Activated CD4-positive, alpha-beta T cell treated with anti-CD3 and anti-CD28 coated beads for 36 hours (primary cell): ENCODE measurements at regions of chr2 and their contacts with region 1.

Region 1: GRCh38 chr2:73176881-73177644 is 25.3 kb upstream of the NOTO start:
- DNase-seq: peak; percentile 95
- ATAC-seq: peak; percentile 72
- H3K4me3 Mint-ChIP-seq: peak overlapping the region; percentile 71
- H3K27ac Mint-ChIP-seq: peak overlapping the region; percentile 63
- H3K4me1 Mint-ChIP-seq: peaks cover 31% of the 10 kb centered on the region
- H3K27me3 Mint-ChIP-seq: peaks cover 42% of the 10 kb centered on the region

Region 2: DNA sequence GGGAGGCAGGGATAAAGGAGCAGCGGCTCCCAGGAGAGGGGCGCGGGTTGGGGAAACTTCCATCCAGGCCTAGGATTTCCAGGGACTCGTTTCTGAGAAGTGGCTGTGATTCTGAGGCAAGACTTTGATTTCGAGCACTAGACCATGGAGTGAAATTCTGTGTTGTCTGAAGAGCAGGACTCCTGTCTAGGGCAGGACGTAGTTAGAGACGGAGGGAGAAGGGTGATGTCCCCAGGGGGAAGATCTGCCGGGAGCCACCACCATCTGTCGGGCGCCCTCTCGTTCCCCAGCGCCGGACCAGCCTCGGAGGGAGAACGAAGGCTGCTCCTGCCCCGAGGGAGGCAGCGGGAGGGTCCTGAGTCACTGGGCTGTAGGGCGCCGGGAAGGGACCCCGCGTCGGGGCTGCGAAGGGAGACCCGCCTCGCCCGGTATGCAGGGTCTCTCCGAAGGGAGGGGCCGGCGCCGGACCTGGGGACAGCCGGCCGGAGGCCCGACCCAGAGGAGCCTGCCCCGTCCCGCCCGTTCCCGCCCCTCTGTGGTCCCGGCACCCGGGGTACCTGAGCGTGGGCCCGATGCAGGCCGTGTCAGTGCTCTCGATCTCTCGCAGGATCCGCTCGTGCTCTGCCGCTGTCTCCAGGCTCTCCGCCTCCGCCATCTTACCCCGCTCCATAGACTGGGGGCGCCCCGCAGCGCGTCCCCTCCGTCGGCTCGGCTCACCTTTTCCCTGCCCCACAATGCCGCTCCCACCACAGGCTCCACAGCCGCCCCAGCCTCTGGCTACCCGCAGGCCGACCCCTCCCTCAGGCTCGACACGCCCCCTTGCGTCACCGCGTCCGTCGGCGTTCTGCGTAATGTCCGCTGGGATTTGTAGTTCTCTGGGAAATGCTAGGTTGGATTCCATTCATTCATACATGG is 351.6 kb before region 1 on chr2 and contains the start of gene EXOC6B:
- CTCF ChIA-PET with region 1: interaction called, 3 read pairs
- POLR2A ChIA-PET with region 1: no interaction called
- intact Hi-C with region 1: loop called in 1 of 2 experiments (anchors 5 kb)
- DNase-seq: peak; percentile 91
- ATAC-seq: peak; percentile 80
- H3K4me3 Mint-ChIP-seq: peak within 1 kb of the TSS; percentile 93
- H3K27ac Mint-ChIP-seq: peak within 1 kb of the TSS; percentile 75
- H3K4me1 Mint-ChIP-seq: peaks cover 40% of the 10 kb centered on the region
- H3K27me3 Mint-ChIP-seq: peaks cover 2% of the 10 kb centered on the region
- total RNA-seq, gene EXOC6B: 7.0 to 9.0 TPM

Region 3: DNA sequence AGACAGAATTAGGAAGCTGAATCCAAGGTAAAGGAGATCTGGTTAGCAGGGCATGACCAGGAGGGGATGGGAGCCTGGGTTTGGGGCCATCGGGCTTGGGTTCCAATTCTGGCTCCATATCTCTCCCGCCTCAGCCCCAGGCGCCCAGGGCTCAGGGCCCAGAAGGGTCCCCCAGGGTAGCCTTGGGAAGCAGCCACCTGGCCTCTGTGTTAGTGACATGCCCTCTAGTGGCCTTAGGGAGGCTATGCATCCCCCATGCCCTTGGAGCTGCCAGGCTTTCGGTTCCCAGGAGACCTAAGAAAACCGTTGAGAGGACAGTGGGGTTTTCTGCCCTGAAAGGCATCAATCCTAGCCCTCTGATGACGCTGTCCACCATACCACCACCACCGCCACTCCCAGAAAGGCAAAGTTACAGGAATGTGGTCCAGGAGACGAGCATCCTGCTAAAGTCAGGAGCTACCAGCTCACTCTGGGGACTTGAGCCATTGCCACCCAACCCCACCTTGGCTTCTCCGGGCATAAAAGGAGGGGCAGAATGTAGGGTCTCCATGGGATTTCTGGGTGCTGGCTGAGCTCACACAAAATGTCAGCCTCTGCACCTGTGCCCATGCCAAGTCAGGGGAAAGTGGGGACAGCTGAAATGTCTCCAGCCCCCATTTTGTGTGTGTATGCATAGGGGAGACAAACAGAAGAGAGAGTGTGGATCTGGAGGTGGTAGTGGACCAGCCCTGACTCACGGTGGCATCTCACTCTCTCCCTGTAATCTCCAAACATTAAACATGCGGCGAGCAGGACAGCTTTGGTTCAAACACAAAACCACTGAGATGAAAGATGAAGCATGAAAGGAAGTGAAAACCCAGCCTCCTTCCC is 203.3 kb before region 1 on chr2:
- CTCF ChIA-PET with region 1: interaction called, 11 read pairs
- POLR2A ChIA-PET with region 1: interaction called, 3 read pairs
- intact Hi-C with region 1: no loop called
- DNase-seq: peak; percentile 64
- ATAC-seq: peak; percentile 83
- H3K4me3 Mint-ChIP-seq: no peak overlapping the region
- H3K27ac Mint-ChIP-seq: no peak overlapping the region
- H3K4me1 Mint-ChIP-seq: no peaks in the 10 kb centered on the region
- H3K27me3 Mint-ChIP-seq: no peaks in the 10 kb centered on the region

Region 4: GRCh38 chr2:73085691-73086360 is 91.2 kb before region 1 on chr2:
- CTCF ChIA-PET with region 1: interaction called, 56 read pairs
- POLR2A ChIA-PET with region 1: no interaction called
- intact Hi-C with region 1: loop called (anchors 1 kb)
- DNase-seq: peak; percentile 91
- ATAC-seq: peak; percentile 98
- H3K4me3 Mint-ChIP-seq: no peak overlapping the region
- H3K27ac Mint-ChIP-seq: no peak overlapping the region
- H3K4me1 Mint-ChIP-seq: no peaks in the 10 kb centered on the region
- H3K27me3 Mint-ChIP-seq: no peaks in the 10 kb centered on the region

Region 5: GRCh38 chr2:73156539-73157124 is 20.4 kb before region 1 on chr2:
- CTCF ChIA-PET with region 1: interaction called, 12 read pairs
- POLR2A ChIA-PET with region 1: no interaction called
- intact Hi-C with region 1: no loop called
- DNase-seq: peak; percentile 73
- ATAC-seq: peak; percentile 61
- H3K4me3 Mint-ChIP-seq: no peak overlapping the region
- H3K27ac Mint-ChIP-seq: no peak overlapping the region
- H3K4me1 Mint-ChIP-seq: no peaks in the 10 kb centered on the region
- H3K27me3 Mint-ChIP-seq: peaks cover 31% of the 10 kb centered on the region

Region 6: DNA sequence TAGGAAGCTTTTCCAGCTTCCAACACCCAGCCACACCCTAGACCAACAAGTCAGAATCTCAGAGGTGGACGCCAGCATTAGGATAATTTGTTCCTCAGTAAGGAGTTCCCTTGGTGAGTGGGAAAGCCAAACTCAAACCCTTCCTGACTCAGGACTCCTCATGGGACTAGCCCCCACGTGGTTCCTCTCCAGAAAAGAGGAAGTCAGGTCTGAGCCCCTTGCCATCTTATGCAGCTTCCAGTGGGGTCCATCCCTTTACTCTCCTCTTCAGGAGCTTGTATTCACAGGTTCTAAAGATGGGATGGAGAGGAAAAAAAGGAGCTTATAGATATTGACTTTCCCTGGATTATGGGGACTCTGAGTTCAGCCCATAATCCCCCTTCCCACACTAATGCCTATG is 10.5 kb after region 1 on chr2:
- CTCF ChIA-PET with region 1: interaction called, 28 read pairs
- POLR2A ChIA-PET with region 1: no interaction called
- intact Hi-C with region 1: no loop called
- DNase-seq: no peak
- ATAC-seq: no peak
- H3K4me3 Mint-ChIP-seq: no peak overlapping the region
- H3K27ac Mint-ChIP-seq: no peak overlapping the region
- H3K4me1 Mint-ChIP-seq: no peaks in the 10 kb centered on the region
- H3K27me3 Mint-ChIP-seq: peaks cover 8% of the 10 kb centered on the region

Region 7: DNA sequence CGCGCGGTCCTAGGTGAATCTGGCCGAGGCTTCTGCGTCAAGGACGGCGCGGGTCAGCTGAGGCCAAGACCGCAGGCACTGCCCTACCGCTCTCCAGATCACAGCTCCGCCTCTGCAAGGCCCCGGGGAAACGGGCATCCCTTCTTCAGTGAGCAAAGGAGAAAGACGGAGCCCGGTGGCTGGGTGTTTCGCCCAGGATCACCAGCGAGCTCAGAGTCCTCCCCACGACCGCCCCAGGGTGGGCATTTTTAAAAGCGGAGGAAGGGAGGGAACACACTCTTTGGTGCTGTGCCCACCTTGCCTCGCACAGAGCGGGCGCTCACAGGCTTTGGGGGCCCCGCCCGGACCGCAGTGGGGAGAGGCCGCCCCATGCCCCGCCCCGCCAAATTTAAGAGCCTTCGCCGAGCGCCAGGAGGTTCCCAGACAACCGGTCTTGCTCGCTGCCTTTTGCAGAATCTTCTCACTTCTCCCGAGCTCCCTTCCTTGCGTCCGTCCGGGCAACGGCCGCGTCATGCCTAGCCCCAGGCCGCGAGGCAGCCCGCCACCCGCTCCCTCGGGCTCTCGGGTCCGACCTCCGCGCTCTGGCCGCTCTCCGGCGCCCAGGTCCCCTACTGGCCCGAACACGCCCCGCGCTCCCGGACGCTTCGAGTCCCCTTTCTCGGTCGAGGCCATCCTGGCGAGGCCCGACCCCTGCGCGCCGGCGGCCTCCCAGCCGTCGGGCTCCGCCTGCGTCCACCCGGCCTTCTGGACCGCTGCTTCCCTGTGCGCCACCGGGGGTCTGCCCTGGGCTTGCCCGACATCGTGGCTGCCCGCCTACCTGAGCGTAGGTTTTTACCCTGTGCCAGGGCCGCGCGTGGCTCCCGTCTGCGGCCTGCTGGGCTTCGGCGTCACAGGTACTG is 25.3 kb after region 1 on chr2 and contains the start of gene NOTO:
- CTCF ChIA-PET with region 1: no interaction called
- POLR2A ChIA-PET with region 1: no interaction called
- intact Hi-C with region 1: no loop called
- DNase-seq: peak; percentile 26
- ATAC-seq: peak; percentile 16
- H3K4me3 Mint-ChIP-seq: no peak within 1 kb of the TSS
- H3K27ac Mint-ChIP-seq: no peak within 1 kb of the TSS
- H3K4me1 Mint-ChIP-seq: peaks cover 4% of the 10 kb centered on the region
- H3K27me3 Mint-ChIP-seq: peaks cover 50% of the 10 kb centered on the region
- total RNA-seq, gene NOTO: not detected

Region 8: DNA sequence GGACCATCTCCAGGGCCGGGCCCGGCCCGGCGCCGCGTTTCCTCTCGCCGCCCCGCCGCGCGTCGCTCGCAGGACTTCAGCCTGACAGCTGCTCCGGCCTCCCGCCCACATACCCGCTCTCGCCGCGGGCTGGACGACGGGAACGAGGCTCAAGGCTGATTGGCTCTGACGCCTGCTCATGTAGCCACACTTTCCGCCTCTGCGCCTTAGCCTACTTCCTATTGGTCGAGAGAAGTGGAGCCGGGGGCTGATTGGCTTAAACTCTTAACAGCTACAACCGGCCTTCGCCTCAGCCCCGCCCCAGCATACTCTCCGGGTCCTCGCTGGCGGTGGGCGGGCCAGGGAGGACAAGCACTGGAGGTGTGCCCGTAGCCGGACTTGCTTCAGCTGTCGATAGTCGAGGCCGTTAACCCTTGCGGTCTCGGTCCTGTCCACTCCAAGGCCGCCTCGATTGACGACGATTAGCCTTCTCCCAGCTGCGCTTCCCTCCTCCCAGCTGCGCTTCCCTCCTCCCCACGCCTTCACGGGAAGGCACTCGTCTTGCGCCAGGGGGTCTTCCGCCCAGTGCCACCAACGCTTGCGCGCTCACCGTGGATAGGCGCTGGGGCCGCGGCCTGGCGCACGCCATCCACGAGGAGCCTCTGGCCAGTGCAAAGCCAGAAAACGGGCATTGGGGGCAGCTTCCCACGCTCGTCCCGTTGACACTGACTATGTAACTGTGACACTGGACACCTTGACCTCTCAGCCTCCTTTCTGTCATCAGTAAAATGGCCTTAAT is 56.3 kb after region 1 on chr2 and contains the start of gene PRADC1:
- CTCF ChIA-PET with region 1: interaction called, 3 read pairs
- POLR2A ChIA-PET with region 1: interaction called, 6 read pairs
- intact Hi-C with region 1: loop called in 1 of 2 experiments (anchors 1 kb)
- DNase-seq: peak; percentile 96
- ATAC-seq: peak; percentile 89
- H3K4me3 Mint-ChIP-seq: peak within 1 kb of the TSS; percentile 92
- H3K27ac Mint-ChIP-seq: peak within 1 kb of the TSS; percentile 98
- H3K4me1 Mint-ChIP-seq: peaks cover 32% of the 10 kb centered on the region
- H3K27me3 Mint-ChIP-seq: no peaks in the 10 kb centered on the region
- total RNA-seq, gene PRADC1: 11.8 to 12.1 TPM